Right ventricle myocardium superior (tissue), 1 donor: ENCODE measurements at regions of chr6 and their contacts with region 1.

Region 1: GRCh38 chr6:99746261-99746895 is 139.7 kb downstream of the PRDM13 start:
- DNase-seq: no peak
- ATAC-seq: peak; percentile 90

Region 2: GRCh38 chr6:99467509-99468106 is 278.8 kb before region 1 on chr6:
- intact Hi-C with region 1: loop called (anchors 5 kb)
- DNase-seq: no peak
- ATAC-seq: no peak

Region 3: DNA sequence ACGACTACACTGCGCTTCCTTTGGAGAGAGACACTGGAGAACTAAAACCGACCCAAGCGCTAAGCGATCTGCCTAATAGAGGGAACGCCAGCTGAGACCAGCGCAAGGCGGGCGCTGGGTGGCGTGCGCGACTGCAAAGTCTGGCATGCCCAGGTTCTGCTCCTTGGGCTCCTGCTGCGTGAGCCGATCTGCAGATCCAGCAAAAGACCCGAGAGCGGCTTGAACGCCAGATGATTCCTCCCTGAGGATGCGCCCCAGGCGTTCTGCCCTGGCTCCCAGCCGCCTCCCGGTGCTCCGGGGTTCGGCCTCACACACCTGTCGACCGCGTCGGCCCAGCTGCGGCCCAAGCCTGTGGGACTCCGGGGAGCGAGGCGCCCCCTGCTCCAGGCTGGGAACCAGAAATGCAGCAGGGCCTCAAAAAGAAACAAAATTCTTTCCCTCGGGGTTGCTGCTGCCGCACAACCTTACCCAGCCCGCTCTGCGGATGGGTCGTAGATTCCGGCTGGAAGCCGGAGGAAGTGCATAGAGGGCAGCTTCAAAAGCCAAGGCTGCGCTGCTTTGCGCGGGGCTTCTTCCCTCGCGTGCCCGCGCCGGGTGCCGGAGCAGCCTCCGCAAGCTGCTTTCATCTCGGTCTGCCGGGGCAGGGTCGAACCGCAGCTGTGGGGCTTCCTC is 157.6 kb before region 1 on chr6:
- intact Hi-C with region 1: loop called (anchors 10 kb)
- DNase-seq: peak; percentile 80
- ATAC-seq: peak; percentile 97

Region 4: DNA sequence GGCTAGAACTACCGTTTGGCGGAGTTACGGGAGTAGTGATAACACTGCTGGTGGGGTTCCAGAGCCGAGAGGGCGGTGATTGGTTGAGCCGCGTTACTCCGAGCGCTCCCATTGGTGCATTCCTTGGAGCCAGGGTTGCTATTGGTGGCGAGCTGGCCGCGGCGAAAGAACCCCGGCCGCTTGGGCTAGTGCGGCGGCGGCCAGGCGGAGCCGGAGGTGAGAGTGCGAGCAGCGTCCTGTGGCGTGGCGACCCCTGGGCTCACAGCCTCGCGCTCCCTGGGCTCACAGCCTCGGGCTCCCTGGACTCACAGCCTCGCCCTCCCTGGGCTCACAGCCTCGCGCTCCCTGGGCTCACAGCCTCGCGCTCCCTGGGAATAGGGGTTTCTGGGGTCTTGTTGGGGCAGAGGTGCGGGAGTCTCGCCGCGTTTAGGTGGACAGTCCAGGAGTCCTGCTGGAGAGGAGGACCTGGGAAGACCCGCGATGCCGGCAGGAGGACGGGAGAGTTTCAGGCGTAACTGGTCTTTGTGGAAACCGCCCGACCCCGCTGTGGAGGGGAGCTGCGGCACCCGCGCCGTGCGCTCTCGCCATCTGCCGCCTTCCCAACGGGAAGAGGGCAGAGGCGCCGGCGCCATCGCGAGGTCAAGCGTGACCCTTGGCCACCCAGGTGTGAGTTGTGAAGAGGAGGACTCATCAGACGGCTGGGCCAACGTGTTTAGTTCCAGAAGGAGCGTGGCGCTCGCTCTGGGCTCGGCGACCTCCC is 127.5 kb before region 1 on chr6:
- intact Hi-C with region 1: no loop called
- DNase-seq: peak; percentile 24
- ATAC-seq: no peak